Activated CD8-positive, alpha-beta T cell treated with anti-CD3 and anti-CD28 coated beads for 36 hours (primary cell): ENCODE measurements at regions of chr1 and their contacts with region 1.

Region 1: DNA sequence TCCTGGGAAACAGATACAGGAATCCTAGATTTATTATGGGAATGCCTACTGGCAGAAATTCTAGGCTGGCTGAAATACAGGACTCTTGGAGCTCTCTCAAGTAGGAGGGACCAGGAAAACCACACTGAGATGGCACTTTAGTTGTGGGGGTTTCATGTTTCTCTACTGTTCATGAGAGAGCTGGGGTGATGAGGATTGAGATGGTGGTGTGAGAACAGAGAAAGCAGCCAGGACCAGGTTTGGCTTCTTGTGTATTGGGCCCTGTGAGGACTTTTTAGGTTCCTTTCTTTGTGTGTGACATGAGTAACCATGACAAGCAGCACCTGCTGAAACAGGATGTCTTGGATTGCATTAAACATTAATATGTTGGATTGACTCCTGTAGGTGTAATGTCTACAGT is 4.9 kb downstream of the ARID1A start:
- DNase-seq: peak; percentile 26
- ATAC-seq: no peak
- H3K4me3 Mint-ChIP-seq: no peak overlapping the region
- H3K27ac Mint-ChIP-seq: no peak overlapping the region
- H3K4me1 Mint-ChIP-seq: peaks cover 5% of the 10 kb centered on the region
- H3K27me3 Mint-ChIP-seq: no peaks in the 10 kb centered on the region
- CTCF ChIP-seq: no peak

Region 2: GRCh38 chr1:26723013-26723991 is 22.6 kb after region 1 on chr1:
- CTCF ChIA-PET with region 1: interaction called, 18 read pairs
- POLR2A ChIA-PET with region 1: interaction called, 123 read pairs
- intact Hi-C with region 1: no loop called
- DNase-seq: peak; percentile 40
- ATAC-seq: peak; percentile 36
- H3K4me3 Mint-ChIP-seq: peak overlapping the region; percentile 7
- H3K27ac Mint-ChIP-seq: peak overlapping the region; percentile 84
- H3K4me1 Mint-ChIP-seq: peaks cover 93% of the 10 kb centered on the region
- H3K27me3 Mint-ChIP-seq: no peaks in the 10 kb centered on the region
- CTCF ChIP-seq: no peak

Region 3: DNA sequence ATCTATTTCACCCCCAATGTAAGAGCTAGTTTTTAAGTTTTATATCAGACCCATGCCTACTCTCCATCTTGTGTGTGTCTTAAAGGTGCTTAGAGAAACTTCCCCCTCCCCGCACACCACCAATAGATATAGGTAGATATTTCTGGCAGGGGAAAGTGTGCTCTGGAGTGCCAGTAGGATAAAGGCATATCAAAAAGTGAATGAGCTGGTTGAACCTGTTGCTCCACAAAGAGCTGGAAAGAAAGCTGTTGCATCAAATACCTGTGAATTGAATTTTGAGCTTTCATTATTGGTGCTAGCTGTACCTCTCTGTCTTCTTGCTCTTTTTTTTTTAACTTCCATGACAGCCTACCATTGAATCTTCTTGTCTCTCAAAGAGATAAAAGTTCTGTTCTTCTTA is 27.9 kb after region 1 on chr1:
- CTCF ChIA-PET with region 1: interaction called, 18 read pairs
- POLR2A ChIA-PET with region 1: interaction called, 123 read pairs
- intact Hi-C with region 1: no loop called
- DNase-seq: no peak
- ATAC-seq: no peak
- H3K4me3 Mint-ChIP-seq: no peak overlapping the region
- H3K27ac Mint-ChIP-seq: peak overlapping the region; percentile 72
- H3K4me1 Mint-ChIP-seq: peaks cover 94% of the 10 kb centered on the region
- H3K27me3 Mint-ChIP-seq: no peaks in the 10 kb centered on the region
- CTCF ChIP-seq: no peak

Region 4: DNA sequence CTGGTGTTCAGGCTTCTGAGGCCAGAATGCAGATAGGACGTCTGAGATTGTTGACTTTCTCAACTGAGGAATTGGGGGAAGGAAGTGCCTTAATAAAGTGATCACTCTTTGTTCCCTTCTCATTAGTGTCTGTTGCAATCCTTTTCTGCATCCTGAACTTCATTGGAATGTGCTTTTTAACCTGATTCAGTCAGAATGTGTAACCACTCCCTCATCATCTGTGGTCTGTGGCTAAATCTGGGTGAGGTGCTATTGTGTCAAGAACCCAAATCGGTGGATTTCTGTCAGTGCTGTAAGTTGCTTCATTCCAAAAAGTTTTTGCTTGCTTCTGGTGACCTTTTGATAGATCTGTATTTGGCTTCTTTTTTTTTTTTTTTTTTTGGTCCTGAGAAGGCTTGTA is 33.3 kb after region 1 on chr1:
- CTCF ChIA-PET with region 1: interaction called, 16 read pairs
- POLR2A ChIA-PET with region 1: interaction called, 123 read pairs
- intact Hi-C with region 1: no loop called
- DNase-seq: peak; percentile 56
- ATAC-seq: peak; percentile 40
- H3K4me3 Mint-ChIP-seq: no peak overlapping the region
- H3K27ac Mint-ChIP-seq: peak overlapping the region; percentile 79
- H3K4me1 Mint-ChIP-seq: peaks cover 63% of the 10 kb centered on the region
- H3K27me3 Mint-ChIP-seq: no peaks in the 10 kb centered on the region
- CTCF ChIP-seq: no peak

Region 5: GRCh38 chr1:26744075-26744959 is 43.6 kb after region 1 on chr1:
- CTCF ChIA-PET with region 1: interaction called, 17 read pairs
- POLR2A ChIA-PET with region 1: interaction called, 80 read pairs
- intact Hi-C with region 1: loop called (anchors 2 kb)
- DNase-seq: peak; percentile 92
- ATAC-seq: peak; percentile 95
- H3K4me3 Mint-ChIP-seq: peak overlapping the region; percentile 58
- H3K27ac Mint-ChIP-seq: peak overlapping the region; percentile 86
- H3K4me1 Mint-ChIP-seq: peaks cover 83% of the 10 kb centered on the region
- H3K27me3 Mint-ChIP-seq: no peaks in the 10 kb centered on the region
- CTCF ChIP-seq: no peak

Region 6: GRCh38 chr1:26949926-26950319 is 249.2 kb after region 1 on chr1:
- CTCF ChIA-PET with region 1: no interaction called
- POLR2A ChIA-PET with region 1: no interaction called
- intact Hi-C with region 1: no loop called
- DNase-seq: no peak
- ATAC-seq: no peak
- H3K4me3 Mint-ChIP-seq: no peak overlapping the region
- H3K27ac Mint-ChIP-seq: no peak overlapping the region
- H3K4me1 Mint-ChIP-seq: no peaks in the 10 kb centered on the region
- H3K27me3 Mint-ChIP-seq: no peaks in the 10 kb centered on the region
- CTCF ChIP-seq: no peak

Region 7: GRCh38 chr1:27001570-27002360 is 301.1 kb after region 1 on chr1:
- CTCF ChIA-PET with region 1: no interaction called
- POLR2A ChIA-PET with region 1: no interaction called
- intact Hi-C with region 1: no loop called
- DNase-seq: no peak
- ATAC-seq: no peak
- H3K4me3 Mint-ChIP-seq: no peak overlapping the region
- H3K27ac Mint-ChIP-seq: no peak overlapping the region
- H3K4me1 Mint-ChIP-seq: peaks cover 5% of the 10 kb centered on the region
- H3K27me3 Mint-ChIP-seq: peaks cover 6% of the 10 kb centered on the region
- CTCF ChIP-seq: no peak